T-cell (primary cell): ENCODE measurements at regions of chr11 and their contacts with region 1.

Region 1: DNA sequence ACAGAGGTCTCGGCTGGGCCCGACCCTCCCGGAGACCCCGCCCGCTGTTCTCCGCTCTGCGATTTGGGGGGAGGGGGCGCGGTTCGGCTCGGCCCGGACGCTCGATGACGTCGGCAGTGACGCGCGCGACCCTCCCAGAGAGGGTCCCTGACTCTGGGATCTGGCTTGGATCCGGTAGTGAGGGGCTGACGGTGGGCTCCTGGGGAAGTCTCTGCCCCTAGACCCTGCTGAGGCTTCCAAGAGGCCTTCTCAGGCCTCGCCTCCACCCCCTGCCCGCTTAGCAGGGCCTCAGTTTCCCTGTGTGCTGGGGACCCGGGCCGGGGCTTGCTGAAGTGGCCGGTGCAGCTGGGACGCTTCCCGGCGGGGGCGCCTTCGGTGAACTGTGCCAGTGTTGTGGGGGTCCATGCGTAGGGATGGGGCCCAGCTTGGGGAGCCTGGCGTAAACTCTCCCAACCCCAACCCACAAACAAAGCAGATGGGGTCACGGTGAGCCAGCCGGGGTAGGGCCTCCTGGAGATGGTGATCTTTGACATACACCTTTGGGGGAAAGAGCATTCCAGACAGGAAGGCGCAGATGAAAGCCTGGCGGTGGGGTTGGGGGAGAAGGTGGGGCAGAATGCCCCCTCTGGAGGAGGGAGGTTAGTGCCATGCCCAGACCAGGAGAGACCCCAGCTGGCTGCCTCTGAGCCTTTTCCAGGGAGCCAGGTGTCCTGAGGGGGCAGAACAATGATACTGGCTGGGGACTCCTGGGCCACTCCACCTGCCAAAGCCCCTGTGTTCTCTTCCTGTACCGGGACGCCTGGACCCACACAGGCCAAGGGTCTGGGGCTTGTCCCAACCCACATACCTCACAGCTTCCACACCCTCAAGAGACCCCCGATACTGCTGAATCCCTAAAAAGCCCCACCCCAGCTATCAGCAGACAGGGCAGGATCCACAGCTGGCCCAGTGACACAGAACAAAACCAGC is 1.1 kb downstream of the B4GALNT4 start:
- DNase-seq: no peak
- ATAC-seq: no peak
- H3K4me3 ChIP-seq: no peak overlapping the region
- H3K4me3 Mint-ChIP-seq: peak overlapping the region; percentile 52 to 64 (median 57)
- H3K27ac ChIP-seq: no peak overlapping the region
- H3K27ac Mint-ChIP-seq: peak overlapping the region in 1 of 2 donors; percentile 36
- H3K4me1 ChIP-seq: peaks cover 0 to 20% of the 10 kb centered on the region in 2 experiments
- H3K4me1 Mint-ChIP-seq: peaks cover 10 to 26% (median 17%) of the 10 kb centered on the region in 3 donors
- H3K27me3 ChIP-seq: peaks cover 0 to 57% of the 10 kb centered on the region in 2 experiments
- H3K27me3 Mint-ChIP-seq: peaks cover 22 to 44% of the 10 kb centered on the region in 2 donors

Region 2: GRCh38 chr11:279966-280582 is 90.3 kb before region 1 on chr11:
- CTCF ChIA-PET with region 1: interaction called in 1 of 2 experiments, 13 read pairs
- POLR2A ChIA-PET with region 1: no interaction called
- DNase-seq: peak in 25 of 35 experiments; percentile 29 to 70 (median 51)
- ATAC-seq: peak; percentile 55 to 61 (median 58)
- H3K4me3 ChIP-seq: peak overlapping the region; percentile 45 to 63
- H3K4me3 Mint-ChIP-seq: peak overlapping the region; percentile 71 to 91 (median 80)
- H3K27ac ChIP-seq: no peak overlapping the region
- H3K27ac Mint-ChIP-seq: peak overlapping the region; percentile 57 to 74
- H3K4me1 ChIP-seq: peaks cover 17 to 61% of the 10 kb centered on the region in 2 experiments
- H3K4me1 Mint-ChIP-seq: peaks cover 43 to 61% (median 54%) of the 10 kb centered on the region in 3 donors
- H3K27me3 ChIP-seq: peaks cover 0 to 62% of the 10 kb centered on the region in 2 experiments
- H3K27me3 Mint-ChIP-seq: peaks cover 0 to 16% of the 10 kb centered on the region in 2 donors